ENCODE measurements at regions of chr21 and their contacts with region 1.

Region 1: GRCh38 chr21:31964692-31965091 is 91.9 kb downstream of the HUNK start:
- DNase-seq: no peak
- ATAC-seq: no peak
- H3K4me3 ChIP-seq: no peak overlapping the region
- H3K27ac ChIP-seq: no peak overlapping the region
- H3K4me1 ChIP-seq: no peaks in the 10 kb centered on the region
- H3K27me3 ChIP-seq: peaks cover 9 to 17% of the 10 kb centered on the region in 2 experiments
- CTCF ChIP-seq: no peak
- EP300 ChIP-seq: no peak
- POLR2A ChIP-seq: no peak
- RAD21 ChIP-seq: no peak

Region 2: DNA sequence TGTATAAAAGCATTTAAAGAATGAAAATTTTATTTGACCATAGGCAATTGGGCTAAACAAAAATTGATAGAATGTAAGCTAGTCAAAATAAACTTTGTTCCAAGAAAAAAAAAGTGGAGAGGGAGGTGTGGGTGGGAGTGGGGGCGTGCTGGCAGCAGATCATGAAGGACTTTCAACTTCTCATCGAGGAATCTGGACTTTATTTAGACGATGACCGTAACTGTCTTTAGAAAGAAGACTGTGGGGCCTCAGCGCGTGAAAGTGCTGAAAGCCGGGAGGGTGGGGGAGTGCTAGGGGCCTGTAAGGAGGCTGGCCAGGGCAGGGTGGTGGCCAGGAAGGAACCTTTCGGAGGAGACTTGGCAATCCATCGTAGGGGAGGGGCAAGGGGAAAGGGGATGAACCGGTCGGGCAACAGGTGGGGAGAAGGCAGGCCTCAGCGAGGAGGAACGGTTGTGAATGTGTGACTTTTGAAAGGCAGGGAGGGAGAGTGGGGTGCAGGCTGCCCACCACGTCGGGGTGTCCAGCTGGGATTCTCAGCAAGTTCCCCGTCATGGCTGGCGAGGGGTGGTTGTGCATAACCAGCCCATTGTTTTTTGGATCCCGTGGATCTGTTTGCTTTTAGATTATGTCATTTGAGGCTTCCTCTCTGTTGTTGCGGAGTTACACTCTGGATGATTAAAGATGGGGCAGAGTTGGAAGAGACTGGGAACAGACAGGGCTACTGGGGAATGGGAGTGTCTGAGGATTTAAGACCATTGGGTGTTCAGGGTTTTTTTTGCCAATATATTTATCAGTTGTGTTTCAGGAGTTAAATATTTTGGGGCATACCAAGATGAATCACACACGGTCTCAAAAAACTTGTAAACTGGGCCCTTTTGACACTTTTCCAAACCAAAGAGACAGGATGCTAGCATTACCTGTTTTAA is 56.3 kb before region 1 on chr21:
- CTCF ChIA-PET with region 1: no interaction called
- POLR2A ChIA-PET with region 1: no interaction called
- in situ Hi-C with region 1: no loop called
- intact Hi-C with region 1: loop called (anchors 10 kb)
- DNase-seq: no peak
- ATAC-seq: no peak; the same call in 2 of the 3 replicates
- H3K4me3 ChIP-seq: no peak overlapping the region
- H3K27ac ChIP-seq: no peak overlapping the region
- H3K4me1 ChIP-seq: no peaks in the 10 kb centered on the region
- H3K27me3 ChIP-seq: peaks cover 52 to 69% of the 10 kb centered on the region in 2 experiments
- CTCF ChIP-seq: no peak
- EP300 ChIP-seq: no peak
- POLR2A ChIP-seq: no peak
- RAD21 ChIP-seq: no peak